ENCODE measurements at regions of chr10 and their contacts with region 1.

Region 1: GRCh38 chr10:97869091-97870042 is 19.7 kb downstream of the GOLGA7B start:
- DNase-seq: peak; percentile 75 to 82
- ATAC-seq: peak; percentile 90 to 98 (median 95)
- H3K4me3 ChIP-seq: no peak overlapping the region
- H3K27ac ChIP-seq: no peak overlapping the region
- H3K4me1 ChIP-seq: peaks cover 0 to 13% (median 9%) of the 10 kb centered on the region in 9 donors
- H3K27me3 ChIP-seq: peaks cover 0 to 36% (median 19%) of the 10 kb centered on the region in 7 donors
- CTCF ChIP-seq: peak; percentile 46 to 83 (median 74)

Region 2: DNA sequence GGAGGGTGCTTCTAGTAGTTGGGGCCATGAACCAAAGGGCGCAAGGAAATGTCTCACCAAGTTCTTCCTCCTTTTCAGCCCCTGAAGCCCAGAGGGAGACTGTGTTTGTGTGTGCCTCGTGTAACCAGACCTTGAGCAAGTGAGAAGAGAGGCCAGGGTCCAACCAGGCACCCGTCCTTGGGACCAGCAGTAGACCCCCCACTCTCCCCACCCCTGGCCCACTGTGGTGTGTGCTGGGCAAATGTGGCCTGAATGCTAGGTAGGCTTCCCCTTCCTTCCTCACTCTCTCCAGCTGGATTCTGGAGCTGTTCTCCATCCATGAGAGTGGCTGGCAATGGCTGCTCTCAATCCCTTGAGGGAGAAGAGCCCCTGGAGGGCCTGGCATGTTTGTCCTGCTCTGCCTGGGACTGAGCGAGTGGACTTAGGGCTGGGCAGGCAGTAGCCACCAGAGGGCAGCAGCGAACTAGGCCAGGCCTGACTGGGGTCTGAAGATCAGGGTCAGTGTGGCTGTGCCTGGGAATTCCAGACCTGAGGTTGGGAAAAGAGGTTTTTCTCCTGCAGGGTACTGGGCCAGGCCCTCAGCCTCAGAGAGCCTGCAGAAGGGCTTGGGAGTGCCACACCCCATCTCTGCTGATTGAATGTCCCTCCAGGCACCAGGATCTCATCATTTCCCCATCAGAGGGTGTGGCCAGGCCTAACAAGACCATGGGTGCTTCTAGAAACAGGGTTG is 110.0 kb before region 1 on chr10:
- intact Hi-C with region 1: loop called in 8 of 10 experiments (anchors 1 to 10 kb)
- DNase-seq: peak; percentile 53 to 65
- ATAC-seq: peak; percentile 75 to 93 (median 78)
- H3K4me3 ChIP-seq: no peak overlapping the region
- H3K27ac ChIP-seq: no peak overlapping the region
- H3K4me1 ChIP-seq: peaks cover 0 to 12% (median 0%) of the 10 kb centered on the region in 9 donors
- H3K27me3 ChIP-seq: no peaks in the 10 kb centered on the region
- CTCF ChIP-seq: peak; percentile 73 to 91 (median 88)

Region 3: DNA sequence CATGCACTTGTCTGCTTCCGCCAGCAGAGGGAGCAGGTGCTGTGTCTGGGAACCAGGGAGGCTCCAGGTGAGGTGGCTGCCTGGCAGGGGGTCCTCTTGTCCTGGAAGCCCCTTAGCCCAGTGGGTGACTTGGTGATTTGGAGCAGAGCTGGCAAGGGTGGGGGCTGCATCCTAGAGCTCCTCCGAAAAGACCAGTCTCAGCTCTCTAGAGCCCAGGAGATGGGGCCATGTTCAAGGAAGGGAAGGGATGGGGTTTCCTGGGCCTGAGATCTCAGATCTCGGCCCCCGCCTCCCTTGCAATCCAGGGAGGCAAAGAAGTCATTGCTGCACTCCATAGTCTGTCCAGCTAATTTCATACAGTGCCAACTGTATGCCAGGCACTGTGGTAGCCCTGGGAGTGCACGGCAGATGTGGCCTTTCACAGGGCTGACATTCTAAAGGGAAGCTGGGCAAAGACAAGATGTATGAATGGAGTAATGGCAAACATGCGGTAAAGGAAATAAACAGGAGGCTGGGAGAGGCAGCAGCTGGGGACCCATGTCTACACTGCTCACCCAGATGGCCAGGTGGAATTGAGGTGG is 77.1 kb before region 1 on chr10:
- intact Hi-C with region 1: loop called (anchors 1 to 10 kb)
- DNase-seq: peak; percentile 60 to 63
- ATAC-seq: peak in 3 of 8 donors; percentile 30 to 70 (median 59)
- H3K4me3 ChIP-seq: no peak overlapping the region
- H3K27ac ChIP-seq: no peak overlapping the region
- H3K4me1 ChIP-seq: peaks cover 4 to 17% (median 10%) of the 10 kb centered on the region in 9 donors
- H3K27me3 ChIP-seq: peaks cover 0 to 23% (median 9%) of the 10 kb centered on the region in 7 donors
- CTCF ChIP-seq: peak in 8 of 9 donors; percentile 74 to 93 (median 88)

Measured in heart right ventricle (tissue), 16 donors.